ENCODE measurements at regions of chr3 and their contacts with region 1.

Region 1: DNA sequence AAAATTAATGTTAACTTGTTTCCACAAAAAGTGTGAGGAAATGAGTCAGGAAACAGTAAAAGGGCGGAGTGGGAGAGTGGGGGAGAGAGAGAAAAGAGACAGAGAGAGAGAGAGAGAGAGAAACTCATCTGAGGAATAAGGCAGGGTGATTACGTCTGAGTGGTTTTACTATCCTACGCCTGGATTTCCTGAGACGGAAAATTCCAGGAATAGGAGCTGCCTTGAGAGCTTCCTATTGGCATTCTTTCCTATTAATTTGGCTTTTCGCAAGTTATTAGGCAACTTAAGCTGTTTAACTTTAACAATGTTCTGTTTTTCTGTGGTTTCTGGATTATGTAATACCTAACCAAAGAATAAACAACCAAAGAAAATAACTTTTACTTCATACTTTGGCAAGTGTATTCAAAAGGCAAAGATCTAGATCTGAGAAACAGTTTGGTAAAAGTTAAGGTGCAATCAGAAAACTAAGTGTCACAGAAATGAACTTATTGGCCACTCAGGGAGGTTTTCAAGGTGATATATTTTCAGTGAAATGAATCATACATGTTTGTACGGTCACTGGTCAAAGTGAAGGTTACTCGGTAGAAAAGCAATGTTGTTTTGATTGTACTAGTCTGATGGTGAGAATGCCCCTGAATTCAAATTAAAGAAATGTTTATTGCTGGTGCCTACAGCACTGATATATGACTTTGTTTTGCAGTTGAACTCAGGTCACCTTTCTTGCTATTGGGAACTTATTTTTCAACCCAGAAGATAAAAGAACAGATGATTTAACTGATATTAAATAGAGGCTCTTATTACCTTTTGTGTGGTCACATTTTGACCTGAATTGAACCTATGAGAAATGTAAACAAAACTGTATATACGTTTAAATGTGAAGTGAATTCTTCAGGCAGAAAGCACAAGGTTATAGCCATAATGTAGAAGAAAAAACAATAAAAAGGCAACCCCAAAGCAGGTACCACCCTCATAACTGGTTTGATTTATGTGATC is 39.9 kb upstream of the TNFSF10 start:
- DNase-seq: peak; percentile 17 to 58 (median 41)
- H3K4me3 ChIP-seq: no peak overlapping the region
- H3K4me3 Mint-ChIP-seq: peak overlapping the region; percentile 74 to 92 (median 90)
- H3K27ac ChIP-seq: peak overlapping the region; percentile 38
- H3K27ac Mint-ChIP-seq: peak overlapping the region; percentile 82 to 98 (median 95)
- H3K4me1 ChIP-seq: peaks cover 27% of the 10 kb centered on the region
- H3K4me1 Mint-ChIP-seq: peaks cover 22 to 30% (median 27%) of the 10 kb centered on the region in 4 donors
- H3K27me3 ChIP-seq: no peaks in the 10 kb centered on the region
- H3K27me3 Mint-ChIP-seq: peaks cover 0 to 1% of the 10 kb centered on the region in 2 donors

Region 2: DNA sequence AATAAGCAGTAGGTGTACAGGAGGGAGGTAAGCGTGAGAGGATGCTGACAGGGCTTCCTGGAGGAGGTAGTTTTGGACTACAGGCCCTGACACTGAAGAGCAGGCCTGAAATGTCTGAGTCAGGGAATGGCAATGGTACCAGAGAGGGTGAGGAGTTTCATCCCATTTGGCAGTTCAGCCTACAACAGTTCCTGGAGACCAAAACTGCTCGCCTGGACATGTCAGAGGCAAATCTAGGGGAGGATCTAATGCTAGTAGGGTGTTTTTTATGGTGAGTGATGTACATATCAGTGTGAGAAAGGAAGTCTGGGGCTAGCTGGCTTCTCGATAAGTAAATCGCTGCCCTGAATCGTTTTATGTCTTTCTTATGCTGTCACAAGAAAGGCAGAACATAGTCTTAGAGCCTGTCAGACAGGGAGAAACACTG is 26.2 kb before region 1 on chr3:
- CTCF ChIA-PET with region 1: no interaction called
- POLR2A ChIA-PET with region 1: interaction called, 7 read pairs
- intact Hi-C with region 1: loop called (anchors 2 kb)
- DNase-seq: no peak
- H3K4me3 ChIP-seq: no peak overlapping the region
- H3K4me3 Mint-ChIP-seq: peak overlapping the region in 7 of 8 donors; percentile 4 to 84 (median 65)
- H3K27ac ChIP-seq: peak overlapping the region; percentile 3
- H3K27ac Mint-ChIP-seq: peak overlapping the region; percentile 62 to 93 (median 88)
- H3K4me1 ChIP-seq: peaks cover 31% of the 10 kb centered on the region
- H3K4me1 Mint-ChIP-seq: peaks cover 28 to 46% (median 37%) of the 10 kb centered on the region in 4 donors
- H3K27me3 ChIP-seq: no peaks in the 10 kb centered on the region
- H3K27me3 Mint-ChIP-seq: no peaks in the 10 kb centered on the region

Region 3: DNA sequence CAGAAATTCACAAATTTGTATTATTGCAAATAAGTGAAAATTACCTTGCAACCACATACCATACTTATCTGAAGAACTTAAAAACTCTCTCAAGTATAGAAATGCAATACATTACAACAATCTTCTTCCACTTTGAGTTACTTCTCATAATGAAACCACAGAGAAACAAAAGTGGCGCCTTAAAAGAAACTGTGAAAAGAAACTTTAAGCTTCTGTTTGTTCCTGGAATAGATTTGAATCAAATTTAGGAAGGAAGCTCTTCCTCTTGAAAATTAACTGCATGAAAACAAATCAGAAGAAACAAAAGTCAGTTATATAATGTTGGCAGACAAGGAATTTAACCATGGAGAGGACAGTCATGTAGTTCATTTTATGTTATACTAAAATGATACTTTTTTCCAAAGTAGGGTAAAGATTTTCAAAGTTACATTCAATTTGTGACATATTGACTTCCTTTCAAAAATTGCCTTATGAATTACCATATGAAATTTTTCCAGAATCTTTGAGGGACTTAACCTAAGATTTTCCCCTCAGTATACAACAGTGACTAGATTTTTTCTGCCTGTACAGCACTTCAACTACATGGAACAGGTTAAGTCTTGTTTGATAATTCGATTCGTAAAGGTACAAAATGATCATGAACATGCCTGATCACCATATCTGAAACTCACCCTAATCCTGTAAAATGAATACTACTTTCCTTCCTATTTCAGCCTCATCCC is 17.7 kb after region 1 on chr3:
- CTCF ChIA-PET with region 1: interaction called, 5 read pairs
- POLR2A ChIA-PET with region 1: interaction called, 10 read pairs
- intact Hi-C with region 1: no loop called
- DNase-seq: no peak
- H3K4me3 ChIP-seq: no peak overlapping the region
- H3K4me3 Mint-ChIP-seq: peak overlapping the region; percentile 47 to 87 (median 74)
- H3K27ac ChIP-seq: peak overlapping the region; percentile 44
- H3K27ac Mint-ChIP-seq: peak overlapping the region; percentile 73 to 95 (median 89)
- H3K4me1 ChIP-seq: peaks cover 74% of the 10 kb centered on the region
- H3K4me1 Mint-ChIP-seq: peaks cover 59 to 88% (median 79%) of the 10 kb centered on the region in 4 donors
- H3K27me3 ChIP-seq: no peaks in the 10 kb centered on the region
- H3K27me3 Mint-ChIP-seq: no peaks in the 10 kb centered on the region

Measured in CD4-positive, alpha-beta memory T cell (primary cell).